ENCODE measurements at regions of chr19 and their contacts with region 1.

Region 1: GRCh38 chr19:11050323-11051114 is 38.7 kb upstream of the LDLR start:
- DNase-seq: no peak
- H3K4me3 ChIP-seq: no peak overlapping the region
- H3K4me3 Mint-ChIP-seq: peak overlapping the region in 2 of 8 donors; percentile 56 to 80
- H3K27ac ChIP-seq: peak overlapping the region; percentile 52
- H3K27ac Mint-ChIP-seq: peak overlapping the region; percentile 80 to 96 (median 94)
- H3K4me1 ChIP-seq: peaks cover 59% of the 10 kb centered on the region
- H3K4me1 Mint-ChIP-seq: peaks cover 22 to 60% (median 44%) of the 10 kb centered on the region in 4 donors
- H3K27me3 ChIP-seq: no peaks in the 10 kb centered on the region
- H3K27me3 Mint-ChIP-seq: no peaks in the 10 kb centered on the region

Region 2: DNA sequence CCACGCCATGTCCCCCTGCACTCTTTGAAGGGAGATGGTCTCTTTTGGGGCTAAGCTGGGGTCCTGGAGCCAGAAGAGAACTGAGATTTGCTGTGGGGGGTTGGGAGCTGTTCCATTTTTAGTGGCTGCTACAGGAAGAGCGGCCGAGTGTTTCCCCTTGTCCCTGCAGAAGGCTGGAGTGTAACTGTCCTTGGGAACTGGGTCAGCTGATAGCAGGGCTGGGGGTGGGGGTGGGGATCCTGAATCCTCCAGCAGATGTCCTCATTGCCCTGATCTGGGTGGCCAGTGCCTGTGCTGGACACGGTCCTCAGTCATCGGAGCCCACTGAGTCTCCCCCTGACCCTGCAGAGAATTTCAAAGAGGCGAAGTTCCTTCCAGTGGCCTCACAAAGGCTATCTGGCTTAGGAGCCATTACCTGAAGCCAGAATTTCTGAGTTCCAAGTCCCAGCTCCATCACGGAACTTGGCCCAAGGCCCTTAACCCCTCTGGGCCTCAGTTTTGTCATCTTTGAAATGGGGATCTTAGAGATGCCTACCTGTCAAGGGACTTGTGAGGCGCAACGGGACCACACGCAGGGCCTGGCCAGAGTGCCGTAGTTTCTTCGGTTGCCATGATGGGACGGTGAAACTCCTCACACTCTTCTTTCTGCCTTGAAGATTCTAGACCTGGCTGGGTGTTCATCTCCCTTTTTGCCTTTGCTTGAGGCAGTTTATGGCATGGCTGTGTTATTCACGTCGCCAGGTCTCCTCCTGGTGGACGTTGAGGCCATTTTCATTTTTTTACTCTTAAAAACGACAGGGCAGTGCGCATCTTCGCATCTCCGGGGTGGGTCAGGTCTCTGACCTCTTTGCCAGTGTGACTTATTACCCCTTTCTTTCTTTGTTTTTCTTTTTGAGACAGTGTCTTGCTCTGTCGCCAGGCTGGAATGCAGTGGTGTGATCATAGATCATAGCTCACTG is 280.7 kb before region 1 on chr19:
- CTCF ChIA-PET with region 1: no interaction called
- POLR2A ChIA-PET with region 1: no interaction called
- intact Hi-C with region 1: no loop called
- DNase-seq: peak in 3 of 5 donors; percentile 12 to 28 (median 20)
- H3K4me3 ChIP-seq: no peak overlapping the region
- H3K4me3 Mint-ChIP-seq: no peak overlapping the region
- H3K27ac ChIP-seq: no peak overlapping the region
- H3K27ac Mint-ChIP-seq: peak overlapping the region; percentile 29 to 90 (median 60)
- H3K4me1 ChIP-seq: peaks cover 37% of the 10 kb centered on the region
- H3K4me1 Mint-ChIP-seq: peaks cover 10 to 52% (median 20%) of the 10 kb centered on the region in 4 donors
- H3K27me3 ChIP-seq: no peaks in the 10 kb centered on the region
- H3K27me3 Mint-ChIP-seq: no peaks in the 10 kb centered on the region

Region 3: GRCh38 chr19:11066326-11066725 is 15.8 kb after region 1 on chr19:
- CTCF ChIA-PET with region 1: no interaction called
- POLR2A ChIA-PET with region 1: no interaction called
- intact Hi-C with region 1: no loop called
- DNase-seq: no peak
- H3K4me3 ChIP-seq: no peak overlapping the region
- H3K4me3 Mint-ChIP-seq: no peak overlapping the region
- H3K27ac ChIP-seq: no peak overlapping the region
- H3K27ac Mint-ChIP-seq: peak overlapping the region in 1 of 7 donors; percentile 70
- H3K4me1 ChIP-seq: no peaks in the 10 kb centered on the region
- H3K4me1 Mint-ChIP-seq: peaks cover 0 to 5% (median under 1%) of the 10 kb centered on the region in 4 donors
- H3K27me3 ChIP-seq: no peaks in the 10 kb centered on the region
- H3K27me3 Mint-ChIP-seq: no peaks in the 10 kb centered on the region

Region 4: DNA sequence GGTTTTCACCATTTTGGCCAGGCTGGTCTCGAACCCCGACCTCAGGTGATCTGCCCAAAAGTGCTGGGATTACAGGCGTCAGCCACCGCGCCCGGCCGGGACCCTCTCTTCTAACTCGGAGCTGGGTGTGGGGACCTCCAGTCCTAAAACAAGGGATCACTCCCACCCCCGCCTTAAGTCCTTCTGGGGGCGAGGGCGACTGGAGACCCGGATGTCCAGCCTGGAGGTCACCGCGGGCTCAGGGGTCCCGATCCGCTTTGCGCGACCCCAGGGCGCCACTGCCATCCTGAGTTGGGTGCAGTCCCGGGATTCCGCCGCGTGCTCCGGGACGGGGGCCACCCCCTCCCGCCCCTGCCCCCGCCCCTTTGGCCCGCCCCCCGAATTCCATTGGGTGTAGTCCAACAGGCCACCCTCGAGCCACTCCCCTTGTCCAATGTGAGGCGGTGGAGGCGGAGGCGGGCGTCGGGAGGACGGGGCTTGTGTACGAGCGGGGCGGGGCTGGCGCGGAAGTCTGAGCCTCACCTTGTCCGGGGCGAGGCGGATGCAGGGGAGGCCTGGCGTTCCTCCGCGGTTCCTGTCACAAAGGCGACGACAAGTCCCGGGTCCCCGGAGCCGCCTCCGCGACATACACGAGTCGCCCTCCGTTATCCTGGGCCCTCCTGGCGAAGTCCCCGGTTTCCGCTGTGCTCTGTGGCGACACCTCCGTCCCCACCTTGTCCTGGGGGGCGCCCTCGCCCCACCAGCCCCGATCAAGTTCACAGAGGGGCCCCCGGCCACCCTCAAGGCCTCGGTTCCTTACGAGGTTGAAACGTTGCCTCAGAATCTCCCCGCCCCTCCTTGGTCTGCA is 39.8 kb after region 1 on chr19:
- CTCF ChIA-PET with region 1: no interaction called
- POLR2A ChIA-PET with region 1: interaction called, 50 read pairs
- intact Hi-C with region 1: loop called (anchors 2 kb)
- DNase-seq: peak; percentile 94 to 98 (median 97)
- H3K4me3 ChIP-seq: peak overlapping the region; percentile 43 to 64
- H3K4me3 Mint-ChIP-seq: peak overlapping the region; percentile 81 to 93 (median 88)
- H3K27ac ChIP-seq: peak overlapping the region; percentile 98
- H3K27ac Mint-ChIP-seq: peak overlapping the region; percentile 93 to 100 (median 99)
- H3K4me1 ChIP-seq: peaks cover 61% of the 10 kb centered on the region
- H3K4me1 Mint-ChIP-seq: peaks cover 26 to 59% (median 43%) of the 10 kb centered on the region in 4 donors
- H3K27me3 ChIP-seq: no peaks in the 10 kb centered on the region
- H3K27me3 Mint-ChIP-seq: no peaks in the 10 kb centered on the region

Region 5: DNA sequence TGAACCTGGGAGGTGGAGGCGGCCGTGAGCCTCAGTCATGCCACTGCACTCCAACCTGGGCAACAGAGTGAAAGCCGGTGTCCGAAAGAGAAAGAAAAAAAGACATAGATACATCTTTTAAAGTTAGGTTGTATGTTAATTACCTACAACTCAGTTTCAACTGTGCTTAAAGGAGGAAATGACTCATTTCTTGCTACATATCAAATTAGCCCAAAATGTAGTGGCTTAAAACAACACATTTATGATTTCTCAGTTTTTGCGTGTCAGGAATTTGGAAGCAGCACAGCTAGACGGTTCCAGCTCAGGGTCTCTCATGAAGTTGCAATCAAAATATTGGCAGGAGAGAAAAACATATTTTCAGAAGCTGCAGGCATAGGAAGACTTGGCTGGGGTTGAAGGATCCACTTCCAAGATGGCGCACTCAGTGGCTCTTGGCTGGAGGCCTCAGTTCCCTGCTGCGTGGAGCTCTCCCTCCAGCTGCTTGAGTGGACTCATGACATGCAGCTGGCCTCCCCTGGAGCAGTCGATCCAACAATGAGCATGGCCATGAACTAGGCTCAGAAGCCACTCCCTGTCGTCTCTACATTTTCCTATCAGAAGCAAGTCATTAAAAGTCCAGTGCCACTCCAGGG is 45.8 kb after region 1 on chr19:
- CTCF ChIA-PET with region 1: no interaction called
- POLR2A ChIA-PET with region 1: interaction called, 50 read pairs
- intact Hi-C with region 1: loop called (anchors 2 kb)
- DNase-seq: peak; percentile 31 to 71 (median 38)
- H3K4me3 ChIP-seq: peak overlapping the region in 1 of 2 donors; percentile 32
- H3K4me3 Mint-ChIP-seq: peak overlapping the region; percentile 46 to 91 (median 76)
- H3K27ac ChIP-seq: peak overlapping the region; percentile 89
- H3K27ac Mint-ChIP-seq: peak overlapping the region; percentile 92 to 100 (median 97)
- H3K4me1 ChIP-seq: peaks cover 65% of the 10 kb centered on the region
- H3K4me1 Mint-ChIP-seq: peaks cover 31 to 62% (median 45%) of the 10 kb centered on the region in 4 donors
- H3K27me3 ChIP-seq: no peaks in the 10 kb centered on the region
- H3K27me3 Mint-ChIP-seq: no peaks in the 10 kb centered on the region